ENCODE measurements at regions of chr1 and their contacts with region 1.

Region 1: DNA sequence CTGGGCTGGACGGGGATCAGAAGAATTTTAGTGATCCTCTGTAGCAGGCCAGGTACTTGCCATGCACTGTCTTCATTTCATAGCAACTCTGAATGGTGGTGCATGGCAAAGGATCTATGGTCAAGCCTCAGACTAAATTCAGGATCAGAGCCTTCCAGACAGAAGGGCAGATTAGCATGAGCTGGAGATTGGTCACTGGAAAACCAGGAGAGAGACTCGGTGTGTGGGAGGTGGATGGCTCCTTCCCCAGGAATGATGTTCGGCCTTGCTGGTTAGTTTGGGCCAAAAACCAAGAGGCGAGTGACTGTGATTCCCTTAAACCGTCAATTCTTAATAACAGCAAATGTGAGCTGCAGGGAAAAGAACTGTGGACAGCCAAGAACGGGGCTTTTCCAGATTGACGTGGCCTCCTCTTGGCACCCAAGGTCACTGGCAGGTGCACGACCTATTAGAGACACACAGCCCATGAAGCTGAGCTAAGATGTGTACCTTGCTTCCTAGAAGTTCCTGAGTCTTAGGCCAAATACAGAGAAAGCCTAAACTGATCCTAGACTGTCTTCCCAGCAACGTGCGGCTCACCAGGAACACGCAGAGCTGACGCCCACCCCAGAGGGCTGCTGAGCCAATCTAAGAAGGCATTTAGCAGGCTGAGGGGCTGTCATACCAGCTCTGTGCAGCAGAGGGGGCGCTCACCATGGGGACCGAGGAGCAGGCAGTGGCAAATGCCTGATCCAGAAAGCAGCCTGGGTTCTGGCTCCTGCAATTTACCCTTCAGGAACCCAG is 18.5 kb downstream of the ALDH4A1 start:
- DNase-seq: peak; percentile 71
- H3K4me3 Mint-ChIP-seq: no peak overlapping the region
- H3K27ac Mint-ChIP-seq: no peak overlapping the region
- H3K4me1 Mint-ChIP-seq: no peaks in the 10 kb centered on the region
- H3K27me3 Mint-ChIP-seq: no peaks in the 10 kb centered on the region

Region 2: GRCh38 chr1:19113697-19114092 is 229.9 kb after region 1 on chr1:
- CTCF ChIA-PET with region 1: interaction called, 12 read pairs
- POLR2A ChIA-PET with region 1: no interaction called
- DNase-seq: peak; percentile 66
- H3K4me3 Mint-ChIP-seq: no peak overlapping the region
- H3K27ac Mint-ChIP-seq: no peak overlapping the region
- H3K4me1 Mint-ChIP-seq: no peaks in the 10 kb centered on the region
- H3K27me3 Mint-ChIP-seq: no peaks in the 10 kb centered on the region

Measured in activated CD4-positive, alpha-beta T cell treated with anti-CD3 and anti-CD28 coated beads, Interleukin-2, amount 10 ng/mL, durations not matched to agents 7 days and 5 days (primary cell).